ENCODE measurements at regions of chr12 and their contacts with region 1.

Region 1: GRCh38 chr12:14937689-14938088 is 648 bp downstream of the ERP27 start:
- DNase-seq: no peak
- H3K4me3 Mint-ChIP-seq: no peak overlapping the region
- H3K27ac Mint-ChIP-seq: no peak overlapping the region
- H3K4me1 Mint-ChIP-seq: peaks cover 35% of the 10 kb centered on the region
- H3K27me3 Mint-ChIP-seq: no peaks in the 10 kb centered on the region

Region 2: DNA sequence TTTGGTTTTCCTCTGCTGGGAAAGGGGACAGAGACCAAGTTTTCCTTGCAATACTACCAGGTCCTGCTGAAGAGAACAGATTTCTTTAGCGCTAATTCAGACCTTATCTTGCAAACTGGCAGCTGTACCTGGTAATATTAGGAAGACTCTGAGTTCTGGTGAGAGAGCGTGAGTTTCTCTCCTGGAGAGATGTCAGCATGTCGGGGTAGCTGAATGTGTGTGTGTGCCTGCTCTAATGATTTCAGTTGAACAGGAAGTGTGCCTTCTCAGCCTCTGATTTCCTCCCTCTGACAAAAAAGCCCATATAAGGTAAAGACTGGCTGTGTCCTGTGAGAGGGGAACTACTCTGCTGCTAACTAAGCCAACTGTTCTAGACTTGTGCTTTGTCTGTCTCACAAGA is 11.0 kb after region 1 on chr12:
- CTCF ChIA-PET with region 1: interaction called, 10 read pairs
- DNase-seq: peak; percentile 68
- H3K4me3 Mint-ChIP-seq: peak overlapping the region; percentile 77
- H3K27ac Mint-ChIP-seq: peak overlapping the region; percentile 90
- H3K4me1 Mint-ChIP-seq: peaks cover 85% of the 10 kb centered on the region
- H3K27me3 Mint-ChIP-seq: no peaks in the 10 kb centered on the region

Region 3: DNA sequence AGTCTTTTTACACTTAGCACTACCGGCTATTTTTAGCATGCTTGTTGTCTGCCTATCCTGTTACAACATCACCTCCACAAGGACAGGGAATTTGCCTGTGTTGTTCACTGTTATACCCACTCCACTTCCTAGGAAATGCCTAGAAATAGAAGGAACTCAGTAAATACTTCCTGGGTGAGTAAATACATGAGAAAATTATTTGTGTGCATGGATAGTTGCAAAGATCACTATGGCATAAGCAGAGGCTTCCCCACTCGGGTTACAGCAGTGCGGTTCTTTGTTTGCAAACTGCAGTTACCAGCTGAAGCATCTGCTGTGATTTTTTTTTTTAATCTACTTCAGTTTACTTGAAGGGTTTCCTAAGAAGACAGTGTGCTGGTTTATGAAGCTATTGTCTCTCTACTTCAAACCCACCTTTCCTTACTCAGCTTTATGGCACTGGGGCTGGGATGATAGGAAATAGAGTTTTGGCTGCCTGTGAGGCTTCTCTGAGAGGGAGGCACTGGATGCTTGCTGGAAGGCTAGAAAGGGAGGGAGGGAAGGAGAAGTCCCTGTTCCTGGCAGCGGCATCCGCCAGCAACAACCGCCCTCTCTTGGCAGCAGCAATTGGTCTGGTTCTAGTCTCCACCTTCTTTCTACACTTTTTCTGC is 64.2 kb after region 1 on chr12:
- CTCF ChIA-PET with region 1: no interaction called
- DNase-seq: no peak
- H3K4me3 Mint-ChIP-seq: no peak overlapping the region
- H3K27ac Mint-ChIP-seq: no peak overlapping the region
- H3K4me1 Mint-ChIP-seq: no peaks in the 10 kb centered on the region
- H3K27me3 Mint-ChIP-seq: peaks cover 47% of the 10 kb centered on the region

Measured in activated naive CD4-positive, alpha-beta T cell treated with anti-CD3 and anti-CD28 coated beads, Interleukin-2, amount 10 ng/mL, durations not matched to agents 7 days and 5 days (primary cell).